Ascending aorta (tissue), 2 donors: ENCODE measurements at regions of chr2 and their contacts with region 1.

Region 1: DNA sequence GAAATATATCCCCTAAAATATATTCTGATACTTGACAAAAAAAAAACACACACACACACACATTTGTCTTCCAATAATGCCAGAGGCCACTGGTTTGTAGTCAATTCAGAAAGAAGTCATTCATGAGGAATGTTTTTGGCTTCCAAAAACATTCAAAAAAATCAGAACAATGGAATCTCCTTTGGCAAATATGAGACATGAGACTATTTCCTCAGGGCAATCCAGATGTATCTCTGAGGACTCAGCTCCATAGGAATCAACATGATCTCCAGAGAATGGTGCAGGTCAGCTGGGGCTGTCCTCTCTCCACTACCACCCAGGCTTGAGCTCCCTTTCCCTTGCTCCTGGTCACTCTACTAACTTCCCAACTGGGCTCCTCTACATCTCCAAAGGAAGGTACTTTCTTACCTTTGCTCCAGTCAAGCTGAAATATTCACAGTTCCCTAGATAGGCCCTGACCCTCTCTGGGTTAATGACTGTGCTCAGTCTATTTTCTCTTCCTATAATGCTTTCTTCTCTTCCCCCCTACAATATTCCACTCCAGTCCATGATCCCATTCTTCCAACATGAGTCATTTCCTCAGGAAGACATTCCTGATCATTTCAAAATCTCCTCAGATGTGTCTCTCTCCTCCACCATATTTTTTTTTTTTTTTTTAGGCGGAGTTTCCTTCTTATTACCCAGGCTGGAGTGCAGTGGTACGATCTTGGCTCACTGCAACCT is 145.3 kb downstream of the C1D start:
- DNase-seq: no peak
- H3K4me3 ChIP-seq: no peak overlapping the region
- H3K27ac ChIP-seq: peak overlapping the region; percentile 82 to 91
- H3K4me1 ChIP-seq: peaks cover 0 to 23% of the 10 kb centered on the region in 2 donors
- H3K27me3 ChIP-seq: no peaks in the 10 kb centered on the region
- CTCF ChIP-seq: no peak

Region 2: DNA sequence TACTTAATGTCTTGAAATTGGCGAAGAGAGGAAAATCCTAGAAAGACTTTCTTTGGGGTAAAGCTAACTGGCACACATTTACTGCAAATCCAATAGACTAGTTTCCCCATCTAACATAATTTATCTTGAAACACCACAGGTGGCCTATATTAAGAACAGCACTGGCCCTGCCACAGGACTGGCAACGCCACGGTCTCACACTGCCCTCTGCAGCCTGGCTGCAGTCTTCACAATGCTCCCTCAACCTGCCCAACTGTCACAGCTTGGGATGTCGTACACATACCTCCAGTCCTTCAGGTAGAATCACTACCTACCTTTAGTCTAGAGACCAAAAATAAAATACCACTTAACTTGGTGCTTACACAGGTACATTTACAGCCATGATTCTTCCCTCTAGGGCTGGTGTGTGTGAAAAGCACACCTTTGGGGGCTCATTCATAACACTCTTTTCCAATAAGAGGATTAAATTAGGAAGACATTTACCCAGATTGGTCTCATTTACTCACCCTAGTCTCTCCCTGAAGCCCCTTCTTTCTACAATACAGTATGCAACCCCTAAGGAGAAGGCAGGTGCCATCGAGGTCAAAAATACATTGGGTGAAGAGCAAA is 76.9 kb before region 1 on chr2:
- intact Hi-C with region 1: no loop called
- DNase-seq: peak in 1 of 2 donors; percentile 72
- H3K4me3 ChIP-seq: no peak overlapping the region
- H3K27ac ChIP-seq: no peak overlapping the region
- H3K4me1 ChIP-seq: no peaks in the 10 kb centered on the region
- H3K27me3 ChIP-seq: no peaks in the 10 kb centered on the region
- CTCF ChIP-seq: peak; percentile 67 to 88 (median 77)

Region 3: DNA sequence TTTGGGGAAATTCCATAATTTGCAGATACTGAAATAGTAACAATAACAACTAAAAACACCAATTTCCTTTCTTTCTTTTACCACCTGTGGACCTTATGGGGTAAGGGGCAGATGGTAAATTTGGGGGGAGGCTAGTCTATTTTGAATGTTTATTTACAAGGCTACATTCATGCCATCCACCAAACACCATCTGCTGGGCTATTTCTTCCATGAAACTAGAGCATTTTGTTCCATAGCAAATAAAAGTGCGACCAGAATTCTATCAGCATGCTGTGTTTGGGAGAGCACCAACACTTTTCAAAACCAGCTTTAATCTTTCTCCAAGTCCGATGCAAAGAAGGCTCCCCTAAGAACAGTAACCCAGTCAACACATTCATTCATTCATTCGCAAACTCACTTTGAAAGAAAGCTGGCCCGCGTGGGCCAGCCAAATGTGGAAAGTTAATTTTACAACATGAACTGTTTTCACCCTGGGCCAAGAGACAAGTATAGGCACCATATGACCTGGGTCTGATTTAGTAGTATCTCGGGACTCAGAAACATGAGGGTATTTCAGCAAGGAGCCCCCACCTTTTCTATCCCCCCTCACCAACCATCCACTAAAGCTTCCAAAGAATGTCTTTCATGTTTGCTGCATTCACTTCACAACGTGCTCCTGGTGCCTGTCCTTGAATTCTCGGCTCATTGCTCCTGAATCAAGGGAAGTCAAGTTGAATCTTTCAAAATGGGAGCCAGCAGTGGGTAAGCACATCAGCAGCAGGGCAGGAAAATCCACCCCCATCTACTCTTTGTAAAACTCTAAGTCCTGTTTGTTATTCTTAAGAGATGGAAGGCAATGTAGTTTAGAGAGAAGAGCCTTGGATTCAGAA is 65.3 kb before region 1 on chr2:
- intact Hi-C with region 1: loop called (anchors 2 kb)
- DNase-seq: no peak
- H3K4me3 ChIP-seq: no peak overlapping the region
- H3K27ac ChIP-seq: no peak overlapping the region
- H3K4me1 ChIP-seq: peaks cover 0 to 2% of the 10 kb centered on the region in 2 donors
- H3K27me3 ChIP-seq: no peaks in the 10 kb centered on the region
- CTCF ChIP-seq: no peak

Region 4: GRCh38 chr2:67871686-67872412 is 45.6 kb before region 1 on chr2:
- intact Hi-C with region 1: loop called (anchors 2 kb)
- DNase-seq: peak; percentile 60 to 91
- H3K4me3 ChIP-seq: no peak overlapping the region
- H3K27ac ChIP-seq: peak overlapping the region; percentile 90 to 91
- H3K4me1 ChIP-seq: peaks cover 7 to 42% of the 10 kb centered on the region in 2 donors
- H3K27me3 ChIP-seq: no peaks in the 10 kb centered on the region
- CTCF ChIP-seq: no peak

Region 5: DNA sequence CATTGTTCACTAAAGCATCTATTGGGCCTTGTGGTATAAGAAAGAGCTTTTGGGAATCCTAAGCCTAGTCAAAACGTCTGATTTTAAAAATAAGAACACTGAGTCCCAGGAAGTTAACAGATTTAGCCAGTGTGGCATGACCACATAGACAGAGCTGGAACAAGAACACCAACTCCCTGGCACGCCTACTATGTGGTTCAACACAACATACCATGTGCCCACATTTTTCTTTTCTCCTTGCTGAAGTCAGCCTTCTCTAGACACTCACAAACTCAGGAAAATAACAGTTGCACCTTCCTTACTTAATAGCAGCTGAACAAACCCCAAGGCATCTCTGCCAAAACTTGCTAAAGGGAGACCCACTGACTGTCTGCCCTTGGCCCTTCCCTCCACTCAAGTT is 20.6 kb after region 1 on chr2:
- intact Hi-C with region 1: loop called (anchors 1 kb)
- DNase-seq: peak in 1 of 2 donors; percentile 83
- H3K4me3 ChIP-seq: no peak overlapping the region
- H3K27ac ChIP-seq: peak overlapping the region; percentile 77 to 78
- H3K4me1 ChIP-seq: peaks cover 5 to 15% of the 10 kb centered on the region in 2 donors
- H3K27me3 ChIP-seq: no peaks in the 10 kb centered on the region
- CTCF ChIP-seq: no peak